ENCODE measurements at regions of chr17 and their contacts with region 1.

Region 1: DNA sequence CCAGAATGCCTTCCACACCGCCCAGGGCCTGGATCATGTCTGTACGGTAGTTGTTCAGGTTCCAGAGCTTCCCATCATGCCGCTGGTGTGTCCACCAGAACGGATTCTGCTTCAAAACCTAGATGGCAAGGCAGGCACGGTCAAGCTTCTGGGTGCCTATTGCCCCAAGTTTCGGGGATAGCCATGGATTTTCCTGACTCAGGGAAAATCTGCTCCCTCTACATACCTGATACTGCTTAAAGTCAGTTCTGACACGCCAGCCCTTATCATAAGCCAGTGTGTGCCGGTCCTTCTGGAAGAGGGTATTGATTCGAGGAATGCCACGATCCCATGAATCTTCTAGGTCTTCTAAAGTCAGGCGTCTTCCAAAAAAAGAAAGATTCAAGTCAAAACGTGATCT is 11.4 kb upstream of the RILP start:
- DNase-seq: no peak
- H3K27ac ChIP-seq: peak overlapping the region; percentile 6; the same call in 1 of the 2 replicates
- CTCF ChIP-seq: no peak

Region 2: DNA sequence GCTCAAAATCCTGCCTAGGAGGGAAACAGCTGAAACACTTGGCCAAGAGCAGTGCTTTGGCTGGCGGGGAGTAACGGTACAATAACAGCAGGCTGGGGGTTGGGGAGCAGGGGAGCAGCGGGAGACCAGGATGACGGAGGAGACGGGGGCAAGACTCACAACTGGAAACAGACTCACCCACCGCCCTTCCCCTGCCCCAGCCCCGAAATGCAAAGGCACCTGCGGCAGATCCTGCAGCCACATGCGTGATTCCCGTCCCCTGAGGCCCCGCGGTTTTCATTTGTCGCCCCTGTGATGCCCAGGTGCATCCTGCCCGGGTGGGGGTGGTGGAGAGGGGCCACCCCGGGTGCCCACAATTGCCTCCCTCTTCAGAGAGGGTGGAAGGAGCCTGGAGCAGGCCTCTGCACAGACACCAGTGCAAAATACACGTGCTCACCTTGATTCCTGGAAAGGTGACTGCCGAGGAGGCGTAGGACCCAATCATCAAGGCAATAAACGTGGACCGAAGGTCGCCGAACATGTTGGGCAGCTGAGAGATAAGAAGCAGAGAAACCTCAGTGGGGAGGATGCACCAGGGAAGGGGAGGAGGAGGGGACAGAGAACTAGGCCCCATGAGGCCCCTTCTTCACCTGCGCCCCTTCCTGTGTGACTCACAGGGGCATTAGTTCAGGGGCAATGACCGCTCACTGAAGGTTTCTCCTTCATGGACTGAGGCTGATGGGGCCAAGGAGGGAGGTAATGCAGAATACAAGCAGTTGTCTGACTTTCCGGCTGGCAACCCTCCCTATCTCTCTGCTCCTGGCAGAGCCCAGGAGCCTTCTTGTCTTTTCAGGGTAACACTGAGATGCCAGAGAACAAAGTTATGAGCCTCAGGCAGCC is 68.1 kb before region 1 on chr17:
- CTCF ChIA-PET with region 1: no interaction called
- POLR2A ChIA-PET with region 1: no interaction called
- DNase-seq: no peak
- H3K27ac ChIP-seq: no peak overlapping the region
- CTCF ChIP-seq: no peak

Region 3: DNA sequence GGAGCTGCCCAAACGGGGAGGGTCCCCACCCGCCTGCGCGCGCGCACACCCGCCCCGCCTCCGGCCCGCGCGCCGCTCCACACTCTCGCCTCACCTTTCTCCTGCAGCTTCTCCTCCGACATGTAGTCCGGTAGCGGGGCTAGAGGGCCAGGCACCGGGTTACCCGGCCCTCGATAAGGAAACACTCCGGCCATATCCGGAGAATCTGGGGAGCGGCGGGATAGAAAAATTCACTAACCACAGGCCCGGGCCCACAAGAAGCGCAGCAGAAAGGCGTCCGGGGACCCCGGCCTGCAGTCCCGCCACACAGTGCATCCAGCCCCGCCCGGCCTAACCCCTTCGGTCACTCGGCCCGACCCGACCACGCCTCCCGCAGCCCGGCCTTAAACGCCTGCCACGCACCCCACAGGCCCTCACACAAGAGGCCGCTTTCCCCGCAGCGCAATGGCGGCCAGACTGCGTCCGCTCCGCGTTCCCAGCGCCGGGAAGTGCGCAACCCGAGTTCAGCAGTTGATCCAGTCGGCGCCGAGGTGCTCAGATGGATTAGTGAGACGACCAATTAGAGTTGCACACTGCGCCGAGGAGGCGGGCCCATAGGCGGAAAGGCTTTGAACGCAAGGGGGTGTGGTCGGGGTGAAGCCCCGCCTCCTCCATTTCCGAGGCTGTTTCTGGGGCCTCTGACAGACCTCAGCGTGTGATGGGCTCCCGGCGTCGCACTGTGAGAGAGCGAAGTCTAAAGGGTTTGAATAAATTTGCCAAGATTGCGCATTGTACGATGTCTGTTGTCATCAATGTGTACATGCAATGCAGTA is 23.5 kb after region 1 on chr17 and contains the start of gene PRPF8:
- CTCF ChIA-PET with region 1: no interaction called
- POLR2A ChIA-PET with region 1: interaction called, 11 read pairs
- DNase-seq: peak; percentile 99
- H3K27ac ChIP-seq: peak within 1 kb of the TSS; percentile 88
- CTCF ChIP-seq: no peak

Region 4: GRCh38 chr17:1907909-1908698 is 247.1 kb after region 1 on chr17:
- CTCF ChIA-PET with region 1: no interaction called
- POLR2A ChIA-PET with region 1: no interaction called
- DNase-seq: no peak
- H3K27ac ChIP-seq: no peak overlapping the region
- CTCF ChIP-seq: no peak

Region 5: GRCh38 chr17:2275722-2276121 is 614.7 kb after region 1 on chr17:
- CTCF ChIA-PET with region 1: no interaction called
- POLR2A ChIA-PET with region 1: no interaction called
- DNase-seq: no peak
- H3K27ac ChIP-seq: no peak overlapping the region
- CTCF ChIP-seq: no peak

Measured in RWPE1 (cell line).